AG04450 (cell line): ENCODE measurements at regions of chr3 and their contacts with region 1.

Region 1: DNA sequence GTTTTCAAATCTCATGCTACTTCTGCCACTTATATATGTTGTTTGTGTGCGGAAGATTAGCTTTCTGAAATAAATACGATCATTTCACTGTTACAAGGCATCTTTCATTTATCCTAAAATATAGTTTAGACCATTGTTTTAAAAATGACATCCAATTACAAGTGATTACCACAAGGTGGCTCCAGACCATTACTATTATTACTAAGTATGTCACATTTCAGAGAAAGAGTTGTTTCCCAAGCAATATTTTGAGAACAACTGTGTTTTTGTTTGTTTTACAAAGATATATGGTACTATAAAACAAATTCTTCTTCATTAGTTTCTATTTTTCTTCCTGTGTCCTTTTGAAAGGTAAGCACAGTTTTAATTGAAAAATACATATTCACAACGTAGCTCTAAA is 136.0 kb upstream of the RAP2B start:
- DNase-seq: no peak
- H3K4me3 ChIP-seq: no peak overlapping the region
- H3K27ac ChIP-seq: no peak overlapping the region
- H3K27me3 ChIP-seq: no peaks in the 10 kb centered on the region
- CTCF ChIP-seq: peak; percentile 64

Region 2: GRCh38 chr3:152452318-152452717 is 573.7 kb before region 1 on chr3:
- CTCF ChIA-PET with region 1: no interaction called
- POLR2A ChIA-PET with region 1: no interaction called
- DNase-seq: no peak
- H3K4me3 ChIP-seq: no peak overlapping the region
- H3K27ac ChIP-seq: no peak overlapping the region
- H3K27me3 ChIP-seq: no peaks in the 10 kb centered on the region
- CTCF ChIP-seq: no peak

Region 3: DNA sequence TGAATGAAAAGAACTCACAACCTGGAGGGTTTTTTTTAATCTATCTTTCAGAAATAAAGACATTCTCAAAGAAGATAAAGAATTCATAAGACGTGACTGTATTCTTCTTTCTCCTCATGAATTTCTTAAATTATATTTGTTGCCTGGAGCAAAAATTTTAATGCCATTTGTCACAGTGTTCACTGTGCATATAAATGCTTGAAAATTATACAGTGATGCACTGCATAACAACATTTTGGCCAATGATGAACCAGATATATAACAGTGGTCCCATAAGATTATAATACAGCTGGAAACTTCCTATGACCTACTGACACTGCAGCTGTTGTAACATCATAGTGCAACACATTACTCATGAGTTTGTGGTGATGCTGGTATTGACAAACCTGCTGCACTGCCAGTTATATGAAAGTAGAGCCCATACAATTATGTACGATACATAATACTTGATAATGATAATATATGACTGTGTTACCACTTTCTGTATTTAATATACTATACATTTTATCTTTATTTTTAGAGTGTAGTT is 123.8 kb before region 1 on chr3:
- CTCF ChIA-PET with region 1: no interaction called
- POLR2A ChIA-PET with region 1: no interaction called
- DNase-seq: no peak
- H3K4me3 ChIP-seq: no peak overlapping the region
- H3K27ac ChIP-seq: no peak overlapping the region
- H3K27me3 ChIP-seq: no peaks in the 10 kb centered on the region
- CTCF ChIP-seq: no peak

Region 4: GRCh38 chr3:152915695-152916094 is 110.3 kb before region 1 on chr3:
- CTCF ChIA-PET with region 1: no interaction called
- POLR2A ChIA-PET with region 1: no interaction called
- DNase-seq: no peak
- H3K4me3 ChIP-seq: no peak overlapping the region
- H3K27ac ChIP-seq: no peak overlapping the region
- H3K27me3 ChIP-seq: no peaks in the 10 kb centered on the region
- CTCF ChIP-seq: no peak

Region 5: GRCh38 chr3:153357436-153357835 is 331.4 kb after region 1 on chr3:
- CTCF ChIA-PET with region 1: no interaction called
- POLR2A ChIA-PET with region 1: no interaction called
- DNase-seq: no peak
- H3K4me3 ChIP-seq: no peak overlapping the region
- H3K27ac ChIP-seq: no peak overlapping the region
- H3K27me3 ChIP-seq: no peaks in the 10 kb centered on the region
- CTCF ChIP-seq: no peak

Region 6: GRCh38 chr3:153595186-153595815 is 569.3 kb after region 1 on chr3:
- CTCF ChIA-PET with region 1: interaction called, 12 read pairs
- POLR2A ChIA-PET with region 1: no interaction called
- DNase-seq: peak; percentile 11
- H3K4me3 ChIP-seq: no peak overlapping the region
- H3K27ac ChIP-seq: no peak overlapping the region
- H3K27me3 ChIP-seq: peaks cover 5% of the 10 kb centered on the region
- CTCF ChIP-seq: peak; percentile 83

Region 7: GRCh38 chr3:153768561-153769469 is 742.8 kb after region 1 on chr3:
- CTCF ChIA-PET with region 1: interaction called, 30 read pairs
- POLR2A ChIA-PET with region 1: no interaction called
- DNase-seq: peak; percentile 20
- H3K4me3 ChIP-seq: no peak overlapping the region
- H3K27ac ChIP-seq: no peak overlapping the region
- H3K27me3 ChIP-seq: no peaks in the 10 kb centered on the region
- CTCF ChIP-seq: peak; percentile 85

Region 8: DNA sequence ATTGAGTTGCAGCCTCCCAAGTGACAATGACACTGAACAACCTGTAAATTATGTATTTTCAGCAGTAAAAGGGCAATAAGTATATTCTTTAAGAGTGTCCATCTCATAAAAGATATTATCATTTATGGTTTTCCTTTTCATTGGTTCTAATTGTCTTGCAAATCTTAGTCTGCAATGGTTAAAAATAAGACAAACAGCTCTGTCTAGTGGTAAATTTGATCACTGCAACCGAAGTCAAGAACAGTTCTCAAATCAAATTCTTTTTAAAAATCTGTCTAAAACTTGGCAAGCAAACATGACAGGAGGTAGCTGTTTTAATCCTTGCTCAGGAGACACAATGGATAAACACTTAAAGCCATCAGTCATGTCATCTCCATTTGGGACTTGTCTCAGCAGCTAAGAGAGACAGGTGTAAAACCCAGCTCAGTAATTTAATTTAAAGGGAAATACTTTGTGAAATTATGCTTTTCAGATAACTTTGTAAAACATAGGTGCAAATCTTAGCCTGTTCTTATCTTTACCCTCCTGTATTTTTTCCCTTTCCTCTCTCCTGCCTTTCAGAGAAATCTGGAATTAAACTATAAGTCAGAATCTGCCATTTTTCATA is 944.8 kb after region 1 on chr3:
- CTCF ChIA-PET with region 1: interaction called, 10 read pairs
- POLR2A ChIA-PET with region 1: no interaction called
- DNase-seq: no peak
- H3K4me3 ChIP-seq: no peak overlapping the region
- H3K27ac ChIP-seq: no peak overlapping the region
- H3K27me3 ChIP-seq: no peaks in the 10 kb centered on the region
- CTCF ChIP-seq: peak; percentile 58